Activated CD4-positive, alpha-beta T cell treated with anti-CD3 and anti-CD28 coated beads, Interleukin-2, amount 10 ng/mL, durations not matched to agents 24 days and 14 days (primary cell): ENCODE measurements at regions of chr15 and their contacts with region 1.

Region 1: DNA sequence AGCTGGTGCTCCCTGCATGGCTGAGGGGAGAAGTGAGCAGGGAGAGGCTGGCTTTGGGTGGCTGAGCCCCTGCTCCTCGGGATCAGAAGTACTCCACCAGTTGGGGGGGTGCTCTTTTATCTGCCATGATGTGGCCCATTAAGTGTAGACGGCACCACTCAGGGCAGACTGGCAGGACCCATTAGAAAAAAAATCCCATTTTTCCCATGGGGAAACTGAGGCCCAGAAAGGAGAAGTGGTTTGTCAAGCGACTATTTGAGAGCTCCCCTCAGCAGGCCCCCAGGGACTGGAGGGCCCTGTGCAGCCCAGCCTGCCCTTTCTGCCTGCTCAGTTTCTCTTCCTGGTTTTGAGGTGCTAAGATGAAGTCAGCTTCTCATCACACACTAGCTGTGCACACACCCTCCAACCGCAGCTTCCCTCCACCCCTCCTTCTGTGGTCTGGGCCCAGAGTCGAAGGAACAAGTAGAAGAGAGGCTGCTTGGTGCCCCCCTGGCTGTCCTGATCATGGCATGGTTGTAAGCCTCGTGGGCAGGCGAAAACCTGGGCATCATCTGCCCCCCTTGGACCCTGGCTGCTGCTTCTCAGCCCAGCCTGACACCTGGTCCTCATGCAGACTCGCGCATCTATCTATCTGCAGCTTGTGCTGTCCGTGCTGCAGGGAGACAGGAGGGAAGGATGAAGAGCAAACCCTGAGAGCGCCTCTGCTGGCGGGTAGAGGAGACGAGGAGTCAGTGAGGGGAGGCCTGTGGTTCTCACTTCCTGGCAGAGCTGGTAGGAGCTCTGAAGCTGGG is 5.6 kb downstream of the CSK start:
- DNase-seq: peak; percentile 97
- H3K4me3 Mint-ChIP-seq: peak overlapping the region; percentile 96
- H3K27ac Mint-ChIP-seq: peak overlapping the region; percentile 99
- H3K4me1 Mint-ChIP-seq: peaks cover 68% of the 10 kb centered on the region
- H3K27me3 Mint-ChIP-seq: no peaks in the 10 kb centered on the region

Region 2: GRCh38 chr15:74799856-74800547 is 12.6 kb after region 1 on chr15:
- intact Hi-C with region 1: loop called (anchors 1 kb)
- DNase-seq: peak; percentile 96
- H3K4me3 Mint-ChIP-seq: peak overlapping the region; percentile 58
- H3K27ac Mint-ChIP-seq: peak overlapping the region; percentile 89
- H3K4me1 Mint-ChIP-seq: peaks cover 37% of the 10 kb centered on the region
- H3K27me3 Mint-ChIP-seq: no peaks in the 10 kb centered on the region

Region 3: GRCh38 chr15:74816808-74817674 is 29.6 kb after region 1 on chr15:
- intact Hi-C with region 1: no loop called
- DNase-seq: no peak
- H3K4me3 Mint-ChIP-seq: no peak overlapping the region
- H3K27ac Mint-ChIP-seq: no peak overlapping the region
- H3K4me1 Mint-ChIP-seq: peaks cover 12% of the 10 kb centered on the region
- H3K27me3 Mint-ChIP-seq: peaks cover 5% of the 10 kb centered on the region